B cell (primary cell): ENCODE measurements at regions of chr10 and their contacts with region 1.

Region 1: DNA sequence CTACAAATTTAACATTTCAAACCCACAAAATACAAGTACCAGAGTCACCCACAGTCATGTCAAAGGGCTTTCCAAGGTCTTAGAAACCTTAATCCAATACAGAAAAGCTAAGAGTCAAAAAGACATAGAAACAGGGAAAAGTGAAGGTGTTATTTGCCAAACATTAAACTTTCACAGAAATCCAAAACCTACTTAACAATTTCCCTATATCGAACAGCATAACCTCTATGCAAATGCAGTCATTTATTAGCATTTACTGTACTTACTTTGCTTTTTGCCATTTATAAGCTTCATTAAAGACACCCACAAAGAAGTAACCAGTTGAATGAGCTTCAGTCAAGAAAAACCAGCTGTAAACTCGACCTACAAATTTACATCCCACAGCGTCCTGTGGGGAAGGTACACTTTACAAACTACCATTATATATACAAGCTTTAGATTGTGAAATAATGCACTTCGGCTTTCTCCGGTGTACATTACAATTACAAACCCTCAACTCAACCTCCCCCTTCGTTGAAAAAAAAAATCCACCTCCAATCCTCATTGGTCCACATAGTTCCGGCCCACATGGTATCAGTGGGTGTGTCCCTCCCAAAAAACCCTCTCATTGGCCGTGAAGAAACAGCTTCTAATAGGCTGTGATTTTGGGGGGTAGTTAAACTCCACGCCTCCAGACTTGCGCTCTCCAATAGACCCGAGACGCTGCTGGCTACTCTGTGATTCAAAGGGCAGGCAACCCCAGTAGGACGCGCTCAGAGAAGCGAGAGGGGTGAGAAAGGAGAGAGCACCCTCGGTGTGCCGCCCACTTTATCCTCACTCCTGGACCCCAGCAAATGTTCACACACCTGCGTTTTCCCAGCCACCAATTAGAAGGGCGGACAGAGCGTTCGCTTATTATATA is 1.4 kb downstream of the PANK1 start:
- DNase-seq: peak; percentile 85
- ATAC-seq: peak; percentile 91
- H3K4me3 ChIP-seq: peak overlapping the region; percentile 60 to 78 (median 75)
- H3K4me3 Mint-ChIP-seq: no peak overlapping the region
- H3K27ac ChIP-seq: peak overlapping the region in 1 of 2 donors; percentile 15
- H3K27ac Mint-ChIP-seq: no peak overlapping the region
- H3K4me1 ChIP-seq: peaks cover 12 to 25% of the 10 kb centered on the region in 2 donors
- H3K4me1 Mint-ChIP-seq: peaks cover 14% of the 10 kb centered on the region
- H3K27me3 ChIP-seq: peaks cover 0 to 2% (median 0%) of the 10 kb centered on the region in 4 experiments
- H3K27me3 Mint-ChIP-seq: no peaks in the 10 kb centered on the region
- CTCF ChIP-seq: no peak

Region 2: DNA sequence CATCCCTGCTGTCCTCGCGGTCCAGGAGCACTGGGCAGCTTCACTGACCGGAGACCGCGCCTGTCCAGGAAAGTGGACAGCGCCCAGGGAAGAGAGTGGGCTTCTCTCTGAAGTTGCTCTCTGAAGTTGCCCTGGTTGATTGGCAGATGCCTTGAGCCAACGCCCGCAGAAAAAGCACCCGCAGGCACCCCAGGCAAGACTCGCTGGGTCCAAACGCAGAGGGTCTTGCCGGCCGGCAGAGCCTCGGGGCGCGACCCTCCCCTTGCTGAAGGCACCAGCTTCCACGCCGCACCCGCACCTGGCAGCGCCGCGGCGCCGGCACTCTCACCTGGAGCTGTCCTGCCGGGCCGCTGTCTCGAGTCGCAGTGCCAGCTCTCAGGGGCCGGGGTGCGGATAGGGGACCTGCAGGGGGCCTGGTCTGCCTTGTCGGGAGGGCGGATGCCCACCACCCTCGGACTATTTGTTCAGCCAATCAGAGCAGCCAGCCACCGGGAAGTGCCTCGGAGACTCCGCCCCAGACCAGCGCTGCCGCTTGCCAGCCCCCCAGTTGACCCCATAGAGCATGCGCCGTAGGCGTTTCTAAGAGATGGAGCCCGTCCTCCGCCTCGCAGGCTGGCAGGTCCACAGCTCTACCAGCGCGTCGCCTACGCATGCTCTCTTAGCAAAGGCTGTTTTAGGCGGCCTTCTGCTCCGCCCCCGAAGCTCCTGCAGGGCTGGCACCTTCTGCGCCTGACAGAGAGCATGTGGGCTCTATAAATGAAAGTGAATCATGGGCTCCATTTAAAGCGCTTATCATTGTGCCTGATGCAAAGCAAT is 392.1 kb before region 1 on chr10 and contains the start of gene LIPA:
- CTCF ChIA-PET with region 1: no interaction called
- POLR2A ChIA-PET with region 1: no interaction called
- intact Hi-C with region 1: loop called (anchors 5 kb)
- DNase-seq: peak; percentile 99
- ATAC-seq: peak; percentile 95
- H3K4me3 ChIP-seq: peak within 1 kb of the TSS; percentile 65 to 92 (median 84)
- H3K4me3 Mint-ChIP-seq: peak within 1 kb of the TSS; percentile 94
- H3K27ac ChIP-seq: peak within 1 kb of the TSS; percentile 48 to 71
- H3K27ac Mint-ChIP-seq: peak within 1 kb of the TSS; percentile 85
- H3K4me1 ChIP-seq: peaks cover 18% of the 10 kb centered on the region in 2 donors
- H3K4me1 Mint-ChIP-seq: peaks cover 24% of the 10 kb centered on the region
- H3K27me3 ChIP-seq: no peaks in the 10 kb centered on the region
- H3K27me3 Mint-ChIP-seq: no peaks in the 10 kb centered on the region
- CTCF ChIP-seq: no peak
- total RNA-seq, gene LIPA: 36.5 and 38.9 TPM in 2 replicates